ENCODE measurements at regions of chr3 and their contacts with region 1.

Region 1: DNA sequence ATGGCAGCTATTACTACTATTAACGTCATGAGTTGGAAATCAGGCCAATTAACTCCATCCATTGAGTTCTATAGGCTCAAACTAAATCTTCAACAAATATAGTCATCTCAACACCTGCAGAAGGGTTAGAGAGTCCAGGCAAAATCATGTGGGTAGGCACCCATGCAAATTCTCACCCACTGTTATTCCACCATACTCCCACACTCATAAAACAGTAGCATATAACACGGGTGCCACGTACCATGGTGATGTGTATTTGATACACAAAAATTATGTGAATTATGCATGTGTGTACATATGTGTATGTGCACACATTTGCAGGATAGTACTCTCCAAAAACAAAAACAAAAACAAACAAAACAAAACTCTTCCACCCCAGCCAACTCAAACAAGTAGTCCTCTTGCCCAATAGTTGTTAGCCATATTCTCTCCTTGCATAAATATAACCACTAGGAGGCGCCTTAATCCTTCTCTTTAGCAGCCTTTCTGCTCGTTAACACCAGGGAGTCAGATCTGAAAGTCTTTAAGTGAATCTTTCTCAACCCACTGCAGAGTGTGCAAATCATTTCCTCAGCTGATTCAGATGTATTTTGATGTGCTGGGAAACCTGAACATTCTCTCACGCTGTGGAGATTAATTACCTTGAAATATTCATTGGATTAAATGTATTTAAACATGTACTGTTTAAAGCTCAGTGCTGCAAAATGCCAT is 38.0 kb upstream of the COPB2 start:
- DNase-seq: no peak
- ATAC-seq: peak; percentile 79

Region 2: DNA sequence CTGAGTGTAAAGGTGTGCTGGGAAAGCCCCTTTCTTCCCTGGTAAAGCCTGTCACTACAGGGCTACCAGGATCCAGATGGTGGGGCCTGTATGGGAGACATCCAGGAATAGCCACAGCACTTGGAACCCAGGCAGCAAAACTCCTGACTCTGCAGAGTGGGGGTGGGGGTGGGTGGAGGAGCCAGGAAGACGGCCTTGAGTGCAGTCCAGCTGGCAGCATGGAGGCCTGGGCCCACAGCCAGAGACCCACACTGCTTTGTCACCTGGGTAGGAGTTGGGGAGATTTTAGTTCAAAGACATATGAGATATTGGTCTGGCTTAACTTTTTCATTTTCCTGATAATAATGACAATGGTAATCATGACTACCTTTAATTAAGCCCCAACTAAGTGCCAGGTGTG is 200.3 kb before region 1 on chr3:
- intact Hi-C with region 1: no loop called
- DNase-seq: no peak
- ATAC-seq: no peak

Region 3: DNA sequence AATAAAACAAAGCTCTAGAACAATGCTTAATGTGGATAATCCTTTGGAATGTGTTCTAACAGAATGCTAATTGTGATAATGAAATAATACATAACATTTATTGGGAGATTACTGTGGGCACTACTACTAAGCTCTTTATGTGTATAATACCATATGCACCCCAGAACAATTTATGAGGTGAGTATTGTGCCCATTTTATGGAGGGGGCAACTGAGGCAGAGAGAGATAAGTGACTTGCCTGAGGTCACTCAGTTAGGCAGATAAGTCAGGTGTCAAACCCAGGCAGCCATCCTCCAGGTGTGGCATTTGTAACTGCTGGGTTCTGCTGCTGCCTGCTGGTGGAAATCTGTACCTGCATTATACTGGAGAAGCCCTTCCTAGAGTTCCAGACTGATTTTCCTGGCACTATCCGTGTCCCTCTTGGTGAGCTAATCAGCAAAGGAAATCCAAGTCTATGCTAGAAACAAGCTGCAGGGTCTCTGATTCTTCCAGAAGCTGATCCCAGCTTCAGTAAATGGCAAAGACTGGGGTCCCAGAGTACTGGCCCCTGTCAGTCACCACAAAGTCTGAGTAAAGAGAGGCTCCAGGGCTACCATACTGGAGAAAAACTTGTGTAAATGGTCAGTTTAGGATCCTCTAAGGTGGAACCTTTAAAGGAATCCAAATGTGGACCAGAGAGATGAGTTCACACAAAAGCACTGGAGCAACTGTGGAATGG is 134.7 kb after region 1 on chr3:
- intact Hi-C with region 1: loop called in 1 of 2 experiments (anchors 5 kb)
- DNase-seq: no peak
- ATAC-seq: peak; percentile 86

Region 4: GRCh38 chr3:139710212-139710611 is 282.8 kb after region 1 on chr3:
- intact Hi-C with region 1: no loop called
- DNase-seq: no peak
- ATAC-seq: peak; percentile 12

Region 5: DNA sequence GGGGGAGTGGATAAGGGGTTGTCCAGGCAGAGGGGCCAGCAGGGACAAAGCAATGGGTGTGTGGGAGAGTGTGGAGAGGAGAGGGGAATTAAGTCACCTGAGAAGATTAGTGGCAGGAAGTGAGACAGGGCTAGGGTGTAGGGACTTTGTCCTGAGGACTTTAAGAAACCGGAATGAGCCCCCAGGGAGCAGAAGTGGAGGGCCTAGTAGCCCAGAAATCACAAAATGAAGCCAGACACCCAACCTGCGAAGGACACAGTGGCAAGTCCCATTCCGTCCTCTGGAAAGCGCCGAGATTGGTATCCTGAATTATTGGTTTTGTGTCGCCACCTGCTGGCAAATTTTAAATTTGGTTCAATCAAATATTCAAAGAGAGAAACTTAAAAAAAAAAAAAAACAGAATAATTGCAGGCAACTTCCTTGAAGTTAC is 1436.2 kb after region 1 on chr3:
- intact Hi-C with region 1: loop called in 1 of 2 experiments (anchors 10 kb)
- DNase-seq: peak in 1 of 2 donors; percentile 52
- ATAC-seq: peak; percentile 64